Spleen (tissue), 13 donors: ENCODE measurements at regions of chr2 and their contacts with region 1.

Region 1: GRCh38 chr2:54724560-54725342 is 1.3 kb downstream of the EML6 start:
- DNase-seq: peak; percentile 89
- H3K4me3 ChIP-seq: peak overlapping the region; percentile 61 to 91 (median 82)
- H3K27ac ChIP-seq: peak overlapping the region in 2 of 8 donors; percentile 79 to 87
- H3K4me1 ChIP-seq: peaks cover 3 to 31% (median 20%) of the 10 kb centered on the region in 6 donors
- H3K27me3 ChIP-seq: peaks cover 0 to 33% (median 12%) of the 10 kb centered on the region in 7 donors
- CTCF ChIP-seq: no peak
- POLR2A ChIP-seq: no peak

Region 2: DNA sequence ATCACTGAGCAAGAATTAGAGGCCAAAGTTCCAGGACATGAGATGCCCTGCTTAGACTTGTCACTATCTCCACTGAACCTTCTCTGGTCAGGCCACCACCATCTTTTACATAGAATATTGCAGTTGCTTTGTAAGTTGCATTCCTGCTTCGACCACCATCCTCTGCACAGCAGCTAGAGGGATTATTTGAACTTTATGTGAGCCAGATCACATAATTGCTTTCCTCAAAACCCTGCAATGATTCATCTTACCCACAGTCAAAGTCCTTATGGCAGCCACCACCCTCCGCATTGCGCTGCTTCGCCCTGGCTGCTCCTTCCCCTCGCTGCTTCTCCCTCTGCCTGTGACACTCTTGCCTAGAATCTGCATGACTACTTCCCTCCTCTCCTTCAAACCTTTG is 110.0 kb after region 1 on chr2:
- intact Hi-C with region 1: loop called (anchors 5 kb)
- DNase-seq: no peak
- H3K4me3 ChIP-seq: no peak overlapping the region
- H3K27ac ChIP-seq: no peak overlapping the region
- H3K4me1 ChIP-seq: no peaks in the 10 kb centered on the region
- H3K27me3 ChIP-seq: no peaks in the 10 kb centered on the region
- CTCF ChIP-seq: no peak
- POLR2A ChIP-seq: no peak

Region 3: DNA sequence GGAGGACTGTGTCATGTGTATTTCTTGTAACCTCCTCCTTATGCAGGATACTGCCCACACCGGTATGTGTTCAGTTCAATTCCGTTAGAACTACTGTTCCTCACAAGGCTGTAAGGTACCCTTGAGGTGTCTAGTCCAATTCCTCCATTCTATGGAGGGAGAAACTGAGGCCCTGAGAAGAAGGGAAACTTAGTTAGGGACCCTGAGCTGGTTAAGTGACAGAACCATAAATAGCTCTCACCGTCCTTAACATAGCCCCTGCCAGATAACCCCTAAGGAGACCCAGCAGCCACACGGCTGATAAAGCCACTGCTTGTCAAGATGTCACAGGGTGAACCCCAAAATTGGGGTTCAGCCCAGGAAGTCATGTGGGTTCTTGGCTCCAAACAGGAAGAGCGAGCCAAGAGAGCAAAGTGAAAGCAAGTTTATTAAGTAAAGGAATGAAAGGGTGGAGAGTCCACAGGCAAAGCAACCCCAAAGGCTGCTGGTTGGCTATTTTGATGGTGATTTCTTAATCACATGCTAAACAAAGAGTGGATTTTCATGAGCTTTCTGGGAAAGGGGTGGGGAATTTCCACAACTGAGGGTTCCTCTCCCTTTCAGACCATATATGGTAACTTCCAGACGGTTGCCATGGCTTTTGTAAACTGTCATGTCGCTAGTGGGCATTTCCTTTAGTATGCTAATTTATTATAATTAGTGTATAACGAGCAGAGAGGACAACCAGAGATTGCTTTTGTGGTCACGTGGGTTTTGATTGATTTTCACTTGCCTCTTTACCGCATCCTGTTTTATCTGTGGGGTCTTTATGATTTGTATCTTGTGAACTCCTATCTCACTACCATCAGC is 408.9 kb after region 1 on chr2:
- intact Hi-C with region 1: no loop called
- DNase-seq: no peak
- H3K4me3 ChIP-seq: peak overlapping the region; percentile 8 to 62 (median 32)
- H3K27ac ChIP-seq: peak overlapping the region; percentile 64 to 89 (median 83)
- H3K4me1 ChIP-seq: peaks cover 22 to 50% (median 43%) of the 10 kb centered on the region in 6 donors
- H3K27me3 ChIP-seq: no peaks in the 10 kb centered on the region
- CTCF ChIP-seq: no peak
- POLR2A ChIP-seq: no peak